ENCODE measurements at regions of chr11 and their contacts with region 1.

Region 1: GRCh38 chr11:59158206-59159068 is 13.5 kb upstream of the DTX4 start:
- DNase-seq: peak; percentile 81
- H3K4me3 ChIP-seq: no peak overlapping the region
- H3K27ac ChIP-seq: no peak overlapping the region
- H3K4me1 ChIP-seq: no peaks in the 10 kb centered on the region
- CTCF ChIP-seq: peak; percentile 95

Region 2: DNA sequence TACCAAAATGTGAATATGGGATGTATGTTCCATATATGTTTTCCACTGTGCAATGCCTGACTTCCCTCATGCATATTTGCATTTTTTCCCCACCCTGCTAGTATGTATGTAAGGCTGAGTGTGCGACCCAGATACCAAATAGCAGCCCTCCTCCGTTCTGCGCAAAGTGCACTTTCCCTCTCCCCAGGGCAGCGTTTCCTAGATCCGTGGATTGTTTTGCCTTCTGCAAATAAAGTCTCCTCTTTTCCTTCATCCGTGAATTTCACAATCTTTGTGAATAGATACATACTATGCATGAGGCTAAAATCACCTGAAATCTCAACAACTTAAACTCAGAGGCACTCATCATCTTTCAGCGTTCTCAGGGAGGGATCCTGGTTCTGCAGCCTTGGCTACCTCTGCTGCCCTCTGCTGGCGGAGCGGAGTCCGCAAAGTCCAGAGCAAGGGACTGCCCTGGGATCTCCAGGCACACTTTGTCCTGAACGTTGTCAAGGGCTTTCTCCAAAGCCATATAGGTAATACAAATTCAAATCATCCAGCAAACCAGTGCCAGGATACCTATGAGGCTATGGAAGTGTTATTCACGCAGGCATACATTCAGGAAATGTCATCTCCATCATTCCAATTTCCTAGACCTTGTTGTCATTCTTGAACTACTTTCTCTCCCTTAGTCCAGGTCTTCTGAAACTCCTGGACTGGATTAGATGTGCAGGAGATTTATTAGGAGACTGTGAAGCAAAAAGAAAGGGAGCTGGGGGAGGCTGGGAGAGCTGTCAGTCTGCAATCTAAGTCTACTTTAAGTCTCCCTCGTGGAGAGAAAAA is 482.9 kb before region 1 on chr11:
- CTCF ChIA-PET with region 1: no interaction called
- POLR2A ChIA-PET with region 1: no interaction called
- intact Hi-C with region 1: loop called (anchors 5 kb)
- DNase-seq: peak; percentile 66
- H3K4me3 ChIP-seq: no peak overlapping the region
- H3K27ac ChIP-seq: no peak overlapping the region
- H3K4me1 ChIP-seq: no peaks in the 10 kb centered on the region
- CTCF ChIP-seq: peak; percentile 97

Region 3: DNA sequence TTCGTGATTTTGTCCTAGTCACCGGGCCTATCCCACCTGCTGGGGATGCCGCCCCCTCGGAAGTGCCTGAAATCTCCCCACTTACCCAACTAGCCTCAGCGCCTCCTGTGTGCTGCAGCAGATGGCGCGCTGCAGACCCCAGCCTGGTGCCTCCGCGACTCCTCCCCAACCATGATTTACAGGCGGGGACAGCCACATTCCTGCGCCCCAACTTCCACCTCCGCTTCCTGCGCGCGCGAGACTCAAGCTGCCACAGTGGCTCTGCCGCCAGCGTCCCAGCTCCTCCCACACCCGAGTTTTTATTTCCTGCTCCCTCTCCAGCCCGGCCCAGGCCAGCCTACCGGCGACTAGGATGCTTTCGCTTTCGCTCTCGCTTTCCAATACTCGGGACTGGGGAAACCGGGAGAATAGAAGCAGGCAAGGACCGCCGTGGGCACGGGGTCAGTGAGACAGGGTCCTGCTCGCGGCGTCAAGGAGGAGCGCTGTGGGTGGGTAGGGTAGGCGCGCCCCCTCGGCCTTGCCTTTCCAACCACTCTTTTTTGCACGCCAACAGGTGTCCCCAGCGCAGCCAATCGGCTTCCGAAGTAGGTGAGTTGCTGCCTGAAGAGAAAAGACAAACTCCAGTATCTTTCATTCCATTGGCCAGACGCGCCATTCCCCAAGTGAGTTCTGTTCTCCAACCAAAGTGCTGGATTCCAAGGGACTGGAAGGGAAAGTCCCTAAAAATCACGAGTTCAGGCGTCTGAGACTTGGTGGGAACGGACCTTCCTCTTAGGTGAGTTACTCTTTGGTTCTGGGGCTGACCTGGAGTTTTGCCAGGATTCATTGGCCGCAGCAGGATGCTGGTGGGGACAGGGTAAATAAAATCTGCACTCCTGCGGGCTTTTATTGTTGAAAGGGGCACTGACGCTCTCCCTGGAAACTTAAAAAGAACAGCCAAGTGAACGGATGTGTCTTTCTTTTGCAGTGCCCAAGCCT is 15.6 kb before region 1 on chr11 and contains the start of gene FAM111A:
- CTCF ChIA-PET with region 1: interaction called, 7 read pairs
- POLR2A ChIA-PET with region 1: interaction called, 14 read pairs
- intact Hi-C with region 1: loop called (anchors 1 kb)
- DNase-seq: peak; percentile 81
- H3K4me3 ChIP-seq: peak within 1 kb of the TSS; percentile 90
- H3K27ac ChIP-seq: peak within 1 kb of the TSS; percentile 90
- H3K4me1 ChIP-seq: peaks cover 40% of the 10 kb centered on the region
- CTCF ChIP-seq: peak; percentile 75
- total RNA-seq, gene FAM111A: 80.8 and 83.9 TPM in 2 replicates

Region 4: GRCh38 chr11:59216641-59217564 is 58.5 kb after region 1 on chr11:
- CTCF ChIA-PET with region 1: no interaction called
- POLR2A ChIA-PET with region 1: no interaction called
- intact Hi-C with region 1: no loop called
- DNase-seq: peak; percentile 94
- H3K4me3 ChIP-seq: peak overlapping the region; percentile 37
- H3K27ac ChIP-seq: peak overlapping the region; percentile 58
- H3K4me1 ChIP-seq: peaks cover 44% of the 10 kb centered on the region
- CTCF ChIP-seq: no peak